Activated B cell treated with CpG ODN at 0.5 μM for 24 hours (primary cell): ENCODE measurements at regions of chr20 and their contacts with region 1.

Region 1: GRCh38 chr20:59571551-59572314 is 32.6 kb upstream of the PHACTR3 start:
- DNase-seq: peak; percentile 40
- ATAC-seq: peak; percentile 62
- H3K4me3 Mint-ChIP-seq: peak overlapping the region; percentile 68
- H3K27ac Mint-ChIP-seq: no peak overlapping the region
- H3K4me1 Mint-ChIP-seq: no peaks in the 10 kb centered on the region
- H3K27me3 Mint-ChIP-seq: peaks cover 27% of the 10 kb centered on the region
- CTCF ChIP-seq: peak; percentile 71

Region 2: DNA sequence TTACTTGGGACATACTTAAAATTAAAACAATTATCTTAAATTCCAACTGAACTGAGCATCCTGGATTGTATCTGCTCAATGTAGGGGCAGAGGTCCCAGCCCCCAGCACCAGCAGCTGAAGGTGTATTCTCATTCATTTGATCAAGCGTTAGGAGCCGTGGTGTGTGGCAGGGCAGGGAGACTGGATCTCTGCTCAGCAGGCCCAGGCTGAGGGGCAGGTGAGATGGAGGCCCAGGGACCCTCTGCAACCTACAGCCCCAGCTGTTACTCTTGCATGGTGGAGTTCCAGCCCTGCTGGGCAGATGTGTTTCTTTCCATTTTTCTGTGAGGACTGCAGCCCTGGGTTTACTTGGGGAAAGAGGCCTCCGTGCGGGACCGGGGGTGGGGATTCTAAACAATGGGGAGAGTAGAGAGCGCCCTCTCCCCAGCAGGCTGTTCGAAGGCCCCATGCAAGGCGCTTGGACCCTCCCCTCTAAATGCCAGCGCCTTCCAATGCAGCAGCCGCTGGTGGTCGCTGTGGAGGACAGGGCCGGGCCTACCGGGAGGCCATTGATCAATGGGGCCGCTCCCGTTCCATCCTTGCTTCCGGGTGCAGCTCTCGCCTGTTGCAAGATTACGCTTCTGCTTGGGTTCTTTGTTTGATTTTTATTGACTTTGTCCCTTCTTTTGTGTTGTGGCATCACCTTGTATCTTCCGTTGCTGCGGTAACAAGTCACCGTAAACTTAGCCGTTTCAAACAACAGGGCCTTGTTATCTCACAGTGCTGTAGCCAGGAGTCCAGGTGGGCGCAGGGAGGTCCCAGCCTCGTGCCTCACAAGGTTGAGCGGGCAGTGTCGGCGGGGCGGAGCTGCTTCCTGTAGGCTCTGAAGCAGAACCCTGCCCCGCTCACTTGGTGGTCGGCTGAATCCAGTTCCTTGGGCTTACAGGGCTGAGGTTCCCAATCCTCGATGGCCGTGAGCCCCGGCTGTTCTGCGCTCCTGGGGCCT is 102.2 kb before region 1 on chr20:
- CTCF ChIA-PET with region 1: no interaction called
- POLR2A ChIA-PET with region 1: no interaction called
- intact Hi-C with region 1: no loop called
- DNase-seq: no peak
- ATAC-seq: no peak
- H3K4me3 Mint-ChIP-seq: no peak overlapping the region
- H3K27ac Mint-ChIP-seq: no peak overlapping the region
- H3K4me1 Mint-ChIP-seq: no peaks in the 10 kb centered on the region
- H3K27me3 Mint-ChIP-seq: no peaks in the 10 kb centered on the region
- CTCF ChIP-seq: no peak

Region 3: DNA sequence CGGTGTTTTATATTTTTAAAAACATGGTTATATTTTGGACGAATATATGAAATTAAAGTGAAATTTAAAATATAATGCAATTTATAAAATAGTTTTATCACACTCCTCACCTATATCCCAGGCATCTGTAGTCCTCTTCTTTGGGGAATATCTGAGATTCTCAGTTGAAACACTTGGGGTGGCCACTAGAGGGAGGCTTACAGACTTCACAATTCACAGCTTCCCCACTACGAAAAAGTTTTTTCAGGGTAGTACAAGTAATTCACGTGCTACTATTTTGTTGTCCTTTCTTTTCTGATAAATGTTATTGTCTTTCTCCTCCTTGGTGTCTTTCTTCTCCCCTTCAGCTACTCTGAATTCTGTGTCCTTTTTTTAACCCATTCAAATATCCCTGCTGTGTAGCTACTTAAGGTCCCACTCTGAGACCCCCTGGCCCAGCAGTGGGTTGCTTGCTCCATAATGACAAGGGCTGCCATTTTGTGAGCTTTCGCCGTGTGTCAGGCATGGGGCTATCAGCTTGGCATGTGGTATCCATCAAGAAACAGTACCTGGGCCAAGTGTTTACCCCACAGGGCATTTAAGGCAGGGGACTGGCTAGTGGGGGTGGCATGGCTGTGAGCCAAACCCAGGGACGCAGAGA is 11.0 kb before region 1 on chr20:
- CTCF ChIA-PET with region 1: interaction called, 11 read pairs
- POLR2A ChIA-PET with region 1: no interaction called
- intact Hi-C with region 1: no loop called
- DNase-seq: no peak
- ATAC-seq: no peak
- H3K4me3 Mint-ChIP-seq: no peak overlapping the region
- H3K27ac Mint-ChIP-seq: no peak overlapping the region
- H3K4me1 Mint-ChIP-seq: no peaks in the 10 kb centered on the region
- H3K27me3 Mint-ChIP-seq: peaks cover 6% of the 10 kb centered on the region
- CTCF ChIP-seq: no peak